Activated T-helper 1 cell treated with anti-CD3 and anti-CD28 coated beads, Interleukin-12 subunit alpha, Interleukin-12 subunit beta, Interleukin-2, Interleukin-4 antibody, amounts not matched to agents 30 ng/mL and 10 ng/mL and 1 ng/mL, durations not matched to agents 14 hours and 24 hours and 36 hours (primary cell): ENCODE measurements at regions of chrX and their contacts with region 1.

Region 1: DNA sequence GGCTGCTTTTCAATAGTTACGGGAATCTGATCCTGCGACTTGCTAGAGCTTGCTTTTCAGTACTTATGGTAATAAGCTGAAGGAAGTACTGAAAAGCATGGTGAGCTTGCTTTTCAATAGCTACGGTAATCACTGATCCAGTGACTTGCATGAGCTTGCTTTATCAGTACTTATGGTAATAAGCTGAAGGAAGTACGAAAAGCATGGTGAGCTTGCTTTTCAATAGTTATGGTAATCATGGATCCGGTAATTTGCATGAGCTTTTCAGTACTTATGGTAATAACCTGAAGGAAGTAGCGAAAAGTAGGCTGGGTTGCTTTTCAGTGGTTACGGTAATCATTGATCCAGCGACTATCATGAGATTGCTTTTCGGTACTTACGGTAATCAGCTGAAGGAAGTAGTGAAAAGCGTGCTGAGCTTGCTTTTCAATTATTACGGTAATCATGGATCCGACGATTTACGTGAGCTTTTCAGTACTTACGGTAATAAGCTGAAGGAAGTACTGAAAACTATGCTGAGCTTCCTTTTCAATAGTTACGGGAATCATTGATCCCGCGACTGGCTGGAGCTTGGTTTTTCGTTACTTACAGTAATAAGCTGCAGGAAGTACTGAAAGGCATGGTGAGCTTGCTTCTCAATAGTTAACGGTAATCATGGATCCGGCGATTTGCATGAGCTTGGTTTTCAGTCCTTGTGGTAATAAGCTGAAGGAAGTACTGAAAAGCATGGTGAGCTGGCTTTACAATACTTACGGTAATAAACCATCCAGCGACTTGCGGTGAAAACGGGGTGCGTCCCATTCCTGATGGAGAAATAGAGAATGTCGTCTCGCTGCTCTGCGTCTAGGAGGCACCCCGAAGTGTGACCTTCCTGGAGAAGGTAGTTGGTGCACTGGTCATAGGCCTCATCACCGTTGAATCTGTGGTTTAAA is 6.5 kb downstream of the CRLF2 start:
- DNase-seq: peak; percentile 32
- H3K4me3 Mint-ChIP-seq: peak overlapping the region; percentile 57
- H3K27ac Mint-ChIP-seq: no peak overlapping the region
- H3K4me1 Mint-ChIP-seq: peaks cover 31% of the 10 kb centered on the region
- H3K27me3 Mint-ChIP-seq: peaks cover 1% of the 10 kb centered on the region

Region 2: DNA sequence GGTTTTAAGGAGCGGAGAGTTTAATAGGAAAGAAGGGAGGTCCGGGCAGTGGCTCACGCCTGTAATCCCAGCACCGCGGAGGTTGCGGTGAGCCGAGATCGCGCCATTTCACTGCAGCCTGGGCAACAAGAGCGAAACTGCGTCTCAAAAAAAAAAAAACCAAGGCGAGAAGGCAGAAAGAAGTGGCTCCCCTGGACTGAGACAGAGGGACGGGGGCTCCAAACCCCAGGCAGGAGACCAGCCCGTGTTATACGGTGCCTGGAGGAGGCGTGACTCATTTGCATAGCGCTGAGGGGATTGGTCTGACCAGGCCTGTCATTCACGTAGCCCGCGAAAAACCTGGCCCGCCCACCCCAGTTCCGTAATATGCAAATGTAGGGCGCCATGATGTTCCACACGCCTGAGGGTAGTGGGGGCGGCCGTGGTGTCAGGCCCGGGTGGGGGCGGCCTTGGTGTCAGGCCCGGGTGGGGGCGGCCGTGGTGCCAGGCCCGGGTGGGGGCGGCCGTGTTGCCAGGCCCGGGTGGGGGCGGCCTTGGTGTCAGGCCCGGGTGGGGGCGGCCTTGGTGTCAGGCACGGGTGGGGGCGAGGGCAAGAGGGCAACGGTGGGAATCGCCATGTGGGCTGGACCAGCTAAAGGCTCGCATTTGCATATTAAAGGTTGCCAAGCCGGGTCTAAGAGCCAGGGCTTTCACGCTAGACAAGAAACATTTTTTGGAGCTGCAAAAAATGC is 922.7 kb before region 1 on chrX:
- intact Hi-C with region 1: loop called (anchors 5 kb)
- DNase-seq: peak; percentile 87
- H3K4me3 Mint-ChIP-seq: peak overlapping the region; percentile 96
- H3K27ac Mint-ChIP-seq: peak overlapping the region; percentile 96
- H3K4me1 Mint-ChIP-seq: peaks cover 5% of the 10 kb centered on the region
- H3K27me3 Mint-ChIP-seq: peaks cover 6% of the 10 kb centered on the region

Region 3: GRCh38 chrX:1112321-1112720 is 93.6 kb before region 1 on chrX:
- intact Hi-C with region 1: no loop called
- DNase-seq: no peak
- H3K4me3 Mint-ChIP-seq: no peak overlapping the region
- H3K27ac Mint-ChIP-seq: no peak overlapping the region
- H3K4me1 Mint-ChIP-seq: peaks cover 5% of the 10 kb centered on the region
- H3K27me3 Mint-ChIP-seq: peaks cover 10% of the 10 kb centered on the region

Region 4: GRCh38 chrX:1224954-1225353 is 19.0 kb after region 1 on chrX:
- intact Hi-C with region 1: loop called (anchors 2 kb)
- DNase-seq: peak; percentile 9
- H3K4me3 Mint-ChIP-seq: no peak overlapping the region
- H3K27ac Mint-ChIP-seq: no peak overlapping the region
- H3K4me1 Mint-ChIP-seq: peaks cover 5% of the 10 kb centered on the region
- H3K27me3 Mint-ChIP-seq: no peaks in the 10 kb centered on the region